IMR-90 (cell line): ENCODE measurements at regions of chr13 and their contacts with region 1.

Region 1: GRCh38 chr13:93227878-93228642 is 1.5 kb downstream of the GPC6 start:
- DNase-seq: peak; percentile 87
- ATAC-seq: peak; percentile 74
- H3K4me3 ChIP-seq: peak overlapping the region; percentile 50
- H3K27ac ChIP-seq: peak overlapping the region; percentile 75
- H3K4me1 ChIP-seq: 0 out of 2 replicates have a peak, but pooled peaks cover 2% of the 10 kb centered on the region
- H3K27me3 ChIP-seq: no peaks in the 10 kb centered on the region
- CTCF ChIP-seq: peak; percentile 63
- POLR2A ChIP-seq: 0 out of 2 replicates have a peak, but pooled peaks have one; percentile 46
- RAD21 ChIP-seq: peak; percentile 64

Region 2: DNA sequence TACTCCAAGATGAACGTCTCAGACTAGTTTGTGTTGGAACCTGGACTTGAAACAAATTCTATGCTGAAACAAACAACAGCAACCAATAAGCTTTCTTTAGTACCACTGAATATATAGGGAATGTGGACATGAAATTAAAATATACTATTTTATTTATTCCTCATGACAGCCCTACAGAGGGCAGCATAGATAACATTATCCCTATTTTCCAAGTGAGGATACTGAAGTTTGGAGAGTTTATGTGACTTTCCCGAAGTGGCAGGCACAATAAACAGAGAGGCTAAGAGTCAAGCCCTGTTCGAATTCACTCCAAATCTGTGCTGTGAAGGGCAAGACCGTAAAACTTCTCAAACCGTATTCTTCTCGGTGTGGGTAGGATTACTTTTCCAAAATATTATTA is 511.3 kb before region 1 on chr13:
- CTCF ChIA-PET with region 1: interaction called, 3 read pairs
- POLR2A ChIA-PET with region 1: no interaction called
- dilution Hi-C with region 1: no loop called
- in situ Hi-C with region 1: loop called (anchors 10 kb)
- intact Hi-C with region 1: loop called (anchors 1 kb)
- DNase-seq: peak; percentile 19
- ATAC-seq: peak; percentile 85
- H3K4me3 ChIP-seq: no peak overlapping the region
- H3K27ac ChIP-seq: no peak overlapping the region
- H3K4me1 ChIP-seq: no peaks in the 10 kb centered on the region
- H3K27me3 ChIP-seq: no peaks in the 10 kb centered on the region
- CTCF ChIP-seq: peak; percentile 60
- POLR2A ChIP-seq: no peak
- RAD21 ChIP-seq: peak; percentile 65

Region 3: GRCh38 chr13:93360021-93360420 is 132.0 kb after region 1 on chr13:
- CTCF ChIA-PET with region 1: no interaction called
- POLR2A ChIA-PET with region 1: no interaction called
- dilution Hi-C with region 1: no loop called
- in situ Hi-C with region 1: no loop called
- intact Hi-C with region 1: loop called (anchors 1 kb)
- DNase-seq: no peak
- ATAC-seq: no peak
- H3K4me3 ChIP-seq: no peak overlapping the region
- H3K27ac ChIP-seq: no peak overlapping the region
- H3K4me1 ChIP-seq: 0 out of 2 replicates have a peak, but pooled peaks cover 3% of the 10 kb centered on the region
- H3K27me3 ChIP-seq: no peaks in the 10 kb centered on the region
- CTCF ChIP-seq: no peak
- POLR2A ChIP-seq: no peak
- RAD21 ChIP-seq: no peak

Region 4: GRCh38 chr13:93775507-93776108 is 547.5 kb after region 1 on chr13:
- CTCF ChIA-PET with region 1: no interaction called
- POLR2A ChIA-PET with region 1: no interaction called
- dilution Hi-C with region 1: no loop called
- in situ Hi-C with region 1: no loop called
- intact Hi-C with region 1: loop called (anchors 5 kb)
- DNase-seq: peak; percentile 85
- ATAC-seq: peak; percentile 73
- H3K4me3 ChIP-seq: peak overlapping the region; percentile 36; the same call in 1 of the 2 replicates
- H3K27ac ChIP-seq: peak overlapping the region; percentile 77; the same call in 1 of the 2 replicates
- H3K4me1 ChIP-seq: peaks cover 7% of the 10 kb centered on the region; the same call in 1 of the 2 replicates
- H3K27me3 ChIP-seq: no peaks in the 10 kb centered on the region
- CTCF ChIP-seq: no peak
- POLR2A ChIP-seq: no peak
- RAD21 ChIP-seq: no peak

Region 5: GRCh38 chr13:94061301-94061700 is 833.2 kb after region 1 on chr13:
- CTCF ChIA-PET with region 1: interaction called, 3 read pairs
- POLR2A ChIA-PET with region 1: no interaction called
- dilution Hi-C with region 1: no loop called
- in situ Hi-C with region 1: no loop called
- intact Hi-C with region 1: loop called (anchors 1 kb)
- DNase-seq: peak; percentile 79
- ATAC-seq: peak; percentile 64
- H3K4me3 ChIP-seq: no peak overlapping the region
- H3K27ac ChIP-seq: no peak overlapping the region
- H3K4me1 ChIP-seq: peaks cover 12% of the 10 kb centered on the region
- H3K27me3 ChIP-seq: no peaks in the 10 kb centered on the region
- CTCF ChIP-seq: no peak
- POLR2A ChIP-seq: no peak
- RAD21 ChIP-seq: no peak

Region 6: GRCh38 chr13:94345374-94346195 is 1117.5 kb after region 1 on chr13:
- CTCF ChIA-PET with region 1: no interaction called
- POLR2A ChIA-PET with region 1: no interaction called
- dilution Hi-C with region 1: no loop called
- in situ Hi-C with region 1: loop called (anchors 25 kb)
- intact Hi-C with region 1: no loop called
- DNase-seq: peak; percentile 44
- ATAC-seq: peak; percentile 24; the same call in 1 of the 2 replicates
- H3K4me3 ChIP-seq: no peak overlapping the region
- H3K27ac ChIP-seq: no peak overlapping the region
- H3K4me1 ChIP-seq: peaks cover 6% of the 10 kb centered on the region
- H3K27me3 ChIP-seq: no peaks in the 10 kb centered on the region
- CTCF ChIP-seq: no peak; the same call in 1 of the 2 replicates
- POLR2A ChIP-seq: no peak
- RAD21 ChIP-seq: peak; percentile 29; the same call in 1 of the 2 replicates